Left cardiac atrium (tissue), 4 donors: ENCODE measurements at regions of chr3 and their contacts with region 1.

Region 1: DNA sequence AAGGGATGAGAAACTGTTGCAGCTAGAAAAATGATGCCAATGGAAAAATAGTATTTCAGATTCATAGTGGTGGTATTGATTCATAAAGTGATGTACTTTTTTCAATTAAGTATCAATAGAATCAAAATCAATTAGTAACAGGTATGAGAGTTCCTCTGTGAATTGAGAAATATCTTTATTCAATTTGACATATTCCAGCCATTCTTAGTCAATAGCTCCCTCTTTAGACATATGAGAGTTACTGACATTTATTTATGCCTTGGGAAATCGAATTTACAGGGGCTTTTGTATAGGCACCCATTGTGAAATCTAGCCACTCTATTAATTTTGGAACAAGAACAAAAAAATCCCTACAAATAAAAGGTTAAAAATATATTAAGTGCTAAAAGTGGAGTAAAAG is 386.9 kb upstream of the CNTN3 start:
- DNase-seq: no peak
- ATAC-seq: no peak

Region 2: DNA sequence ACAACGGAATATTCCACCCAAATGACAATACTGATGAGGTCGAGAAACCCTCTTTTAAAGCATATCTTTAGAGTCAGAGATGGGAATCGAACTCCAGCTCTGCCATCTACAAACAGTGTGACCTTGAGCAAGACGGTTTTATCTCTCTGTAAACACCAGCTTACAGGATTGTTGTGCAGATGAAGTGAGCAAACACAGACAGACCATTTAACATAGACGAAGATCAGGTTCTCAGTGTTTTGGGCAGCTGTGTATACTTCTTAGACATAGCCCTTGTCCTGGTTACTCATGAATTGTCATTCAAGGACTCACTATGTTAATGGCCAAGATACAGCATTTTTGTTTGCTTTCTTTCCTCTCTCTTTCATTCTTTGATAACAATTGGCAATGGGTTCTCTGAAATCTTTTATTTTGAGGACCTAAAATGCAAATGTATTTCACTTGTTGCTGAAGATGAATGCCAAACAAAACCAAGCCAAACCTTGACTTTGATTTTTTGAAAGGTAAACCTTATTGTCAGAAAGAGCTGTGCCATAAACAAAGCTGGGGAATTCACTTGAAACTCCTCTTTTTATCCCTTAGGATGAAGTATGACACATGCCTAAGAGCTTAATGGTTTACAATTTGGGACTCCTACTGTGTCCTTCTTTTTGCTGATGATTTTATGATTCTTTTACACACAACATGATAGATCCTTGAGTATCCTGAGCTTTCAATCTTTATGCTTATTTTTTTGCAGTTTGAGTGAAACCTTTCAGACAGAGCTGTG is 1126.5 kb before region 1 on chr3:
- intact Hi-C with region 1: loop called in 1 of 2 experiments (anchors 10 kb)
- DNase-seq: no peak
- ATAC-seq: no peak

Region 3: GRCh38 chr3:74267588-74268184 is 733.6 kb before region 1 on chr3:
- intact Hi-C with region 1: loop called in 1 of 2 experiments (anchors 5 kb)
- DNase-seq: peak; percentile 28
- ATAC-seq: peak in 1 of 2 donors; percentile 36

Region 4: DNA sequence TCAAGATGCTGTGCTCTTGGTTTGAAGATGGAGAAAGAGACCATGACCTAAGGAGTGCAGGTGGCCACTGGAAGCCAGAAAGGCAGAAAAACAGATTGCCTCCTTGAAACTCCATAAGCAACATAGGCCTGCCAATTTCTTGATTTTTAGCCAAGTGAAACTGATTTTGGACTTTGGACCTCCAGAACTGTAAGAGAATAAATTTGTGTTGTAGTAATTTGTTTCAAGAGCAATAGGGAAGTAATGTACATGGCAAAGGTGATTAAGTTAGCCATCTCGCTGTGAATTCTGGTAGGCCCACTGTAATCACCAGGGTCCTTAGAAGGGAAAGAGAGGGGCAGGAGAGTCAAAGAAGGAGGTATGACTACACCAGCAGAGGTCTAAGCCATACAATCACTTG is 625.7 kb before region 1 on chr3:
- intact Hi-C with region 1: loop called in 1 of 2 experiments (anchors 10 kb)
- DNase-seq: no peak
- ATAC-seq: no peak